K562 (cell line): ENCODE measurements at regions of chr16 and their contacts with region 1.

Region 1: DNA sequence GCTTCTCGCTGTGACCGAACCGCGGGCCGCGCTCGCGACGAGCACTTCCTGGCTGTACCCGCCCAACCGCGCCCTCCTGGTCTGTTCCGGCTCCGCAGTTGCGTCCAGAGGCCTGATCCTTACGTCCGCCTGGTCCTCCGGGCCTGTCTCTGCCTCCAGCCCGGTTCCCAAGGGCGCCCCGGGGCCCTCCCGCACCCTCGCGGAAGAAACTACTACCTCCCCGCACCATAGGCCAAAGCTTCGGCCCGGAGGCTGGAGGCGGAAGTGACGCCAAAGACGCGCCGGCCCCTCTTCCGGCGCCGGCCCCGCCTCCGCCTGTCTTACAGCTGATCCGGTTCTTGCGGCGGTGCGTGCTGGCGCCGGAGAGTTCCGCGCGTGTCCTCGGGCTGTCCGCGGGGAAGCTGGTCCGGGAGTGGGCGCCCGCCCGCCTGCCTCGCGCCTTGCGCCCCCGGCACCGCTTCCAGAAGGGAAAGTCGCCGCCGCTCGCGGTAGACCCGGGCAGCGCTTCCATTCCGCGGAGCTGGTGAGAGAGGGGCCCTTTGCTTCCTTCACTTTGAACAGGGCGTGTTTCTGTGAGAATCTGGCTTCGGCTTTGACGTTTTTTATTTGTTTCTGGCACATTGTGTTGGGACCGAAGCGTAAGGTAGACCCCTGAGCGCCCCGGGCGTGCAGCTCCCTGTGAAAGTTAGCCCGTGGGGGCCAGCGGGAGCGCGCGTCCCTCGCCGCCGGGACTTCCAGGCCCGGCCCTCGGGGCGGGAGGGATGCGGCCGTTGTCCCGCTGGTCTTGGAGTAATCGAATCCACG is at the start of gene ZNF778:
- DNase-seq: peak; percentile 88 to 92 (median 88)
- ATAC-seq: peak; percentile 80
- H3K4me3 ChIP-seq: peak within 1 kb of the TSS; percentile 90
- H3K27ac ChIP-seq: peak within 1 kb of the TSS; percentile 78
- H3K4me1 ChIP-seq: peaks cover 20 to 31% of the 10 kb centered on the region in 2 experiments; a peak in 4 of 5 replicates
- H3K27me3 ChIP-seq: no peaks in the 10 kb centered on the region
- CTCF ChIP-seq: peak in 1 of 3 experiments; percentile 2; a peak in 1 of 6 replicates
- EP300 ChIP-seq: no peak
- POLR2A ChIP-seq: peak; percentile 94
- RAD21 ChIP-seq: no peak
- polyA plus RNA-seq, gene ZNF778: 0.70 to 0.80 TPM

Region 2: GRCh38 chr16:89241187-89242007 is 23.8 kb after region 1 on chr16:
- CTCF ChIA-PET with region 1: no interaction called
- POLR2A ChIA-PET with region 1: interaction called, 4 read pairs
- in situ Hi-C with region 1: no loop called
- intact Hi-C with region 1: loop called (anchors 2 kb)
- DNase-seq: peak; percentile 77 to 86 (median 82)
- ATAC-seq: peak; percentile 90
- H3K4me3 ChIP-seq: peak overlapping the region; percentile 67
- H3K27ac ChIP-seq: peak overlapping the region; percentile 96
- H3K4me1 ChIP-seq: peaks cover 0 to 28% of the 10 kb centered on the region in 2 experiments; a peak in 2 of 5 replicates
- H3K27me3 ChIP-seq: no peaks in the 10 kb centered on the region
- CTCF ChIP-seq: no peak
- EP300 ChIP-seq: no peak
- POLR2A ChIP-seq: peak; percentile 98
- RAD21 ChIP-seq: peak in 1 of 2 experiments; percentile 3; a peak in 1 of 4 replicates

Region 3: DNA sequence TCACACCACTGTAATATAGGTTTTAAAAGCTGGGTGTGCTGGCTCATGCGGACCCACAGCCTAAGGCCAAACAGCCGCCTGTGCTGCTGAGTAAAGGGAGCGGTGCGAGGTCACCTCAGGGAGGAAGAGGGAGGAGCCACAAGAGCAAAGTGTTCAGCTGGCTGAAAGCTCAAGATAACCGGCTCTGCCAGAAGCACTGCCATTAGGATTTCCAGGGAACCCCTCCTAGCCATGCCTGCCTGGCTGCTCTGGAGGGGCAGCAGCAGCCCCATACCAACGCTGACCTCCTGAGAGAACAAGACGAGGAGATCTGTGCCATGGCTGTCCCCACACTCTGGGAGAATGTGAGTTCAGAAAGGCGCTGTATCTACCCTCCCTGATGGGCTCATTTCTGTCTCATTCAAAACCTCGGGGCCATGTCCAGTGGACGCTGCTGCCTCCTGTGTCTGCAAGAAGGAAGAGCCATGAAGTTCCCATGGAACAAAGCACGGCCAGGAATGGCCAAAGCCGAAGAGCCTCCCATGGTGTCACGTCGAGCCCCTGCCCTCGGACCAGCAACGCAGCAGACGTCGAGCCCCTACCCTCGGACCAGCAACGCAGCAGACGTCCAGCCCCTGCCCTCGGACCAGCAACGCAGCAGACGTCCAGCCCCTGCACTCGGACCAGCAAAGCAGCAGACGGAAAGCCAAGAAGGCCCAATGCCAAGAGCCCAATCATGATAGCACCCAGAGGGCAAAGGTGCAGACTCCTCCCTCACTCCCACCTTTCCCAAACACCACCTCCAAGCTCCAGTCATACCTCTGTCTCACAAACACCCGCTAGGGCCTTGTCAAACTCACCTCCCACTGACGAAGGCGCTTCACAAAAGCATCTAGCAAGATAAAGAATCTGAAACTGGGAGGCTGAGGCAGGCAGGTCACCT is 165.8 kb after region 1 on chr16:
- CTCF ChIA-PET with region 1: no interaction called
- POLR2A ChIA-PET with region 1: no interaction called
- in situ Hi-C with region 1: no loop called
- intact Hi-C with region 1: no loop called
- DNase-seq: peak; percentile 71 to 91 (median 82)
- ATAC-seq: peak; percentile 96
- H3K4me3 ChIP-seq: peak overlapping the region; percentile 4; the same call in 1 of the 2 replicates
- H3K27ac ChIP-seq: peak overlapping the region; percentile 77
- H3K4me1 ChIP-seq: peaks cover 26 to 72% of the 10 kb centered on the region in 2 experiments
- H3K27me3 ChIP-seq: no peaks in the 10 kb centered on the region
- CTCF ChIP-seq: peak; percentile 29 to 43 (median 42); a peak in 4 of 6 replicates
- EP300 ChIP-seq: no peak
- POLR2A ChIP-seq: 0 out of 2 replicates have a peak, but pooled peaks have one; percentile 19
- RAD21 ChIP-seq: no peak; a peak in 1 of 4 replicates